ENCODE measurements at regions of chr15 and their contacts with region 1.

Region 1: GRCh38 chr15:81265944-81266775 is 57.8 kb downstream of the STARD5 start:
- DNase-seq: no peak
- H3K4me3 ChIP-seq: no peak overlapping the region
- H3K27me3 ChIP-seq: peaks cover 4% of the 10 kb centered on the region
- CTCF ChIP-seq: peak; percentile 96

Region 2: DNA sequence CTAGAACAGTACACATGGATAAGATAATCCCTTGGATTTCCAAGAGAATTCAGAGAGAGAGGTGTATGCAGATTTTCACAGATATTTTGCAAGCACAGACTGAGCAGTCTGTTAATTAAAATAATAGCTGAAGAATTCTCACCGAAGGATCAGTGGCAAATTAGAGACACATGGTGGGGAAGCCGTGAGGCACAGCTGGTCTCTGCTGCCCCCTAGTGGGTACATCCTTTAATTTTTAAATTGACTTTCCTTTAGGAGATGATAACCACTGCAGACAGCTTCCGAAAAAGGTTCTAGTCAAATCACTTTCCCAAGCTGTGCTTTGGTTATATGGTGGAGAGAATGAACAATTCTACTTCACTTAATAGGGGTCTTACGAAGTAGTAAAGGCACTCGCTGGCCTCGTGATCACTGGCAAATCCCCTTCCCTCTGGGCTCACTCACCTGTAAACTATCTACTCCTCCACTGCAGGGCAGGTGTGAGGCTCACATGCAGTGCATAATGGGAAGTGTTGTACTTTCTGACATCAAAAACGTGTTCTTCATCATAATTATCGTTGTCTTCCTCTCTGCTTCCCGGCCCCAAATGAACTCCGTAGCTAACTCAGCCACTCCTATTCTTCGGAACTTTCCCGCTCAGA is 296.0 kb before region 1 on chr15:
- CTCF ChIA-PET with region 1: interaction called, 53 read pairs
- POLR2A ChIA-PET with region 1: no interaction called
- DNase-seq: no peak
- H3K4me3 ChIP-seq: no peak overlapping the region
- H3K27me3 ChIP-seq: no peaks in the 10 kb centered on the region
- CTCF ChIP-seq: peak; percentile 77

Region 3: DNA sequence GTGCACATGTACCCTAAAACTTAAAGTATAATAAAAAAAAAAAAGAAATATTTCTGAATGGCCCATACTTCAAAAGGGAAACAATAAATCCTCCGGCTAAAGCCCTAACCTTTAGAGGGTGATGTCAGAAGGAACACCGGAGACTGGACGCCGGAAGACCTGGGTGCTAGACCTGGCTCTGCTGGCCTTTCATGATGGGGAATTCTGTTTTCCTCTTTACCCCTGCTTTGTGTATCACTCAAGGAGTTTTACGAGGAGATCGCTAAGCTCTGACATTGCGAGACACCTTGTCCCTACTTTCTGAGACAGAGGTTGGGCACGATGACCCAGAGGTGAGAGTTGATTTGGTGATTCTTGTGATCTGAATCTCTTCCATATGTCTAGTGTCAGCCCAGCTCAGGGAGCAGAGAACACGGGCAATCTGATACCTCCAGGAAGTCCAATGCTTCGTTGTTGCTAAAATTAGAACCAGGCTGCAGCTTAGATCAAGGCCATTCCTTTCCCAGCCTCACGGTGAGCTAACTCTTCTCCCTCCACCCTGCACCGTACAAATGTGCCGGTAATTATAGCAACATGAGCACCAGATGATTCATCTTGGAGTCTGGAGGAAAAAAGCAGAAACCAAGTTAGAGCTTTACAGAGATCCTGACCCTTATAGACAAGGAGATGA is 174.1 kb before region 1 on chr15:
- CTCF ChIA-PET with region 1: interaction called, 16 read pairs
- POLR2A ChIA-PET with region 1: no interaction called
- DNase-seq: peak; percentile 93
- H3K4me3 ChIP-seq: no peak overlapping the region
- H3K27me3 ChIP-seq: 0 out of 2 replicates have a peak, but pooled peaks cover 1% of the 10 kb centered on the region
- CTCF ChIP-seq: no peak

Region 4: DNA sequence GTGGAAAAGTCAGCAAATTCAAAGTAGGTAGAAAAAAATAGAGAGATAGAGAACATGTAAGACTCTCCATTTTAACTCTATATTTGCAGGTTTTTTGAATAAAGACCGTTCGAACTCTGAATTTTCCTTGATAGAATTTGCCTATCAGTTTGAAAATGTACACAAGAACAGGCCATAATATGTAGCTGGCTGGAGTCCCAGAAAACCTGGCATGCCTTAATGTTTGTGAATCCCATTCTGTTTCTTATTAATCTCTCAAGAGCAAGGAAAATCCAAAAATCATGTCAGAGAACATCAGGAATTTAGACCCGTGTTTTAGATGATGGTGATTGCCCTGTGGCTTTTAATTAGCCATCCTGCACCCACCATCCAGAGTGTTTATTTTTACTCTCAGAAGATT is 139.3 kb before region 1 on chr15:
- CTCF ChIA-PET with region 1: interaction called, 11 read pairs
- POLR2A ChIA-PET with region 1: no interaction called
- DNase-seq: no peak
- H3K4me3 ChIP-seq: no peak overlapping the region
- H3K27me3 ChIP-seq: no peaks in the 10 kb centered on the region; the same call in none of the 2 replicates
- CTCF ChIP-seq: no peak

Region 5: GRCh38 chr15:81163961-81164800 is 102.0 kb before region 1 on chr15:
- CTCF ChIA-PET with region 1: interaction called, 28 read pairs
- POLR2A ChIA-PET with region 1: no interaction called
- DNase-seq: peak; percentile 25
- H3K4me3 ChIP-seq: no peak overlapping the region
- H3K27me3 ChIP-seq: no peaks in the 10 kb centered on the region
- CTCF ChIP-seq: peak; percentile 33; the same call in 1 of the 2 replicates

Region 6: GRCh38 chr15:81296673-81297072 is 30.5 kb after region 1 on chr15:
- CTCF ChIA-PET with region 1: interaction called, 15 read pairs
- POLR2A ChIA-PET with region 1: no interaction called
- DNase-seq: no peak
- H3K4me3 ChIP-seq: no peak overlapping the region
- H3K27me3 ChIP-seq: no peaks in the 10 kb centered on the region; the same call in none of the 2 replicates
- CTCF ChIP-seq: no peak

Measured in BJ (cell line).